GM23248 (cell line): ENCODE measurements at regions of chr11 and their contacts with region 1.

Region 1: GRCh38 chr11:12043959-12044819 is 35.8 kb upstream of the DKK3 start:
- DNase-seq: peak; percentile 94
- H3K4me3 ChIP-seq: peak overlapping the region; percentile 37
- H3K27ac ChIP-seq: peak overlapping the region; percentile 96
- H3K4me1 ChIP-seq: peaks cover 43% of the 10 kb centered on the region
- H3K27me3 ChIP-seq: no peaks in the 10 kb centered on the region

Region 2: DNA sequence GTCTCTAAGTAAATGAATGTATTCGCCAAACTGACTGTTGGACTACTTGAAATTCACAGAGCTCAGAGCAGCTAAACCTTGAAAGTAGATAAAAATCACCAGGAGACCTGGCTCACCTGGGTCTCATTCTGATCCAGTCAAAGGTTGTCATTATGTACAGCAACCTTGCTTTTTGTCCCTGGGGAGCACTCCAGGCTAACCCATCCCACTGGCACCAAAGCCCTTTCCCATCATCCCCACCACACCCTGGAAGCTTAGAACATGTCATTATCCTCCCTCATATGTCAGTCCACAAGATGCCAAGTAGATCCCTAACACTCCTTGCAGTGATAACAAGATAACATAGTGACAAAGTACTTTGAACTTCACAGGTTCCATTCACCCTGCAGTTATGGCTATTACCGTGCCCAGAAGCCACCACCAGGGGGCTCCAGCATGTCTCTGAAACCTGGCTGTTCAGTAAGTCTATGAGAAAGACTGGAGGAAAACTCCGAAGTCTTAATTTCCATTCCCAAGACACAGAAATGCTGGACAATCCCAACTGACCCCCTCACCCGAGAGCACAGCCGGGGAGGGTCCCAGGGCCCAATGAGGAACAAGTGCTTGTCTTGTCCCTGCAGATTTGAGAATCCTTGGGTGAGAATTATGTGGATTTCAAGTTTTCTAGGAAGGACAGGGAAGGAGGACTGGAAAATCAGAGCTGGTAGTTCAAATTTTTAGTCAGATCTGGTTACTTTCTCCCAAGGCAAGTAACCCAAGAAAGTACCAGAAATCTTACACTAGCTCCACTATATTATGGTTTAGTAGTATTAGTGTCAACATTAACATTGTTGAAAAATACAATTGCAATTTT is 245.4 kb before region 1 on chr11:
- in situ Hi-C with region 1: loop called (anchors 10 kb)
- DNase-seq: peak; percentile 81
- H3K4me3 ChIP-seq: no peak overlapping the region
- H3K27ac ChIP-seq: no peak overlapping the region
- H3K4me1 ChIP-seq: peaks cover 3% of the 10 kb centered on the region; the same call in 1 of the 2 replicates
- H3K27me3 ChIP-seq: no peaks in the 10 kb centered on the region

Region 3: GRCh38 chr11:12625438-12626071 is 581.4 kb after region 1 on chr11:
- in situ Hi-C with region 1: no loop called
- DNase-seq: peak; percentile 87
- H3K4me3 ChIP-seq: peak overlapping the region; percentile 41
- H3K27ac ChIP-seq: peak overlapping the region; percentile 93
- H3K4me1 ChIP-seq: peaks cover 21% of the 10 kb centered on the region
- H3K27me3 ChIP-seq: no peaks in the 10 kb centered on the region